ENCODE measurements at regions of chr12 and their contacts with region 1.

Region 1: GRCh38 chr12:58896278-58896677 is 24.0 kb downstream of the LRIG3 start:
- DNase-seq: no peak
- H3K4me3 ChIP-seq: no peak overlapping the region
- H3K27ac ChIP-seq: no peak overlapping the region
- H3K4me1 ChIP-seq: peaks cover 16% of the 10 kb centered on the region
- H3K27me3 ChIP-seq: no peaks in the 10 kb centered on the region
- CTCF ChIP-seq: no peak

Region 2: GRCh38 chr12:57868851-57869268 is 1027.4 kb before region 1 on chr12:
- CTCF ChIA-PET with region 1: interaction called, 14 read pairs
- POLR2A ChIA-PET with region 1: no interaction called
- intact Hi-C with region 1: no loop called
- DNase-seq: peak; percentile 80
- H3K4me3 ChIP-seq: no peak overlapping the region
- H3K27ac ChIP-seq: peak overlapping the region; percentile 43
- H3K4me1 ChIP-seq: peaks cover 33% of the 10 kb centered on the region
- H3K27me3 ChIP-seq: no peaks in the 10 kb centered on the region
- CTCF ChIP-seq: no peak

Region 3: GRCh38 chr12:58540480-58541299 is 355.6 kb before region 1 on chr12:
- CTCF ChIA-PET with region 1: no interaction called
- POLR2A ChIA-PET with region 1: no interaction called
- intact Hi-C with region 1: no loop called
- DNase-seq: peak; percentile 89
- H3K4me3 ChIP-seq: no peak overlapping the region
- H3K27ac ChIP-seq: no peak overlapping the region
- H3K4me1 ChIP-seq: no peaks in the 10 kb centered on the region
- H3K27me3 ChIP-seq: no peaks in the 10 kb centered on the region
- CTCF ChIP-seq: peak; percentile 87

Measured in A673 (cell line).